Aorta (tissue), 5 donors: ENCODE measurements at regions of chr13 and their contacts with region 1.

Region 1: DNA sequence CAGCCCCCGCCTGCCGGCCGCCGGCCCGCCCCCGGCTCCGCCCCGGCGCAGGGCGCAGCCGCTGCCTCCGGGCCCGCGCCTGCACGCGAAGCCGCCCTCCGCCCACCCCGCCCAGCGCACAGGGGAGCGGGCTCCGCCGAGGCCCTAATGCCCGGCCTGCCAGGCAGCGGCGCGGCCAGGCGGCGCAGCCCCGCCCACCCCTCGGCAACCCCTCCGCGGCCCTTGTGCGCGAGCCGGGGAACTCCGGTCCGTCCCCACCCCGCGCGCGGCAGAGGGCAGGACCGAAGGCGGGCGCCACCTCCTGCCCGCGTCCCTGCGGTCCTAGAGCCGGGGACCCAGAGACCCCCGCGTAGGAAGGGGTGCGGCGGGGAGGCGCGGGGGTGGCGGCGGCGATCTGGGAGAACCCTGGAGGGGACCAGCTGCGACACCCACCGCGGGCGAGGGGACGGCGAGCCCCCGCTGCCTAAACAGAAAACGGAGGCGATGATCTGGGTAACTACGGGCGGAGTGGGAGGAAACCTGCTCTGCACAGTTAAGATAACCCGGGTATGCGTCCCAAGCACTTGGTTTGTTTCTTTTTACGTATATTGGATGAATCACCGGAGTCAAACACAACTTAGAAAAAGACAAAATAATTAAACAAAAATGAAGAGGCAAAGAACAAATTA is 350 bp upstream of the USP12 start:
- DNase-seq: peak; percentile 97 to 98
- ATAC-seq: peak; percentile 96
- H3K4me3 ChIP-seq: peak overlapping the region; percentile 93 to 99
- H3K27ac ChIP-seq: peak overlapping the region; percentile 58 to 97
- H3K4me1 ChIP-seq: peaks cover 6% of the 10 kb centered on the region in 2 donors
- H3K27me3 ChIP-seq: no peaks in the 10 kb centered on the region

Region 2: DNA sequence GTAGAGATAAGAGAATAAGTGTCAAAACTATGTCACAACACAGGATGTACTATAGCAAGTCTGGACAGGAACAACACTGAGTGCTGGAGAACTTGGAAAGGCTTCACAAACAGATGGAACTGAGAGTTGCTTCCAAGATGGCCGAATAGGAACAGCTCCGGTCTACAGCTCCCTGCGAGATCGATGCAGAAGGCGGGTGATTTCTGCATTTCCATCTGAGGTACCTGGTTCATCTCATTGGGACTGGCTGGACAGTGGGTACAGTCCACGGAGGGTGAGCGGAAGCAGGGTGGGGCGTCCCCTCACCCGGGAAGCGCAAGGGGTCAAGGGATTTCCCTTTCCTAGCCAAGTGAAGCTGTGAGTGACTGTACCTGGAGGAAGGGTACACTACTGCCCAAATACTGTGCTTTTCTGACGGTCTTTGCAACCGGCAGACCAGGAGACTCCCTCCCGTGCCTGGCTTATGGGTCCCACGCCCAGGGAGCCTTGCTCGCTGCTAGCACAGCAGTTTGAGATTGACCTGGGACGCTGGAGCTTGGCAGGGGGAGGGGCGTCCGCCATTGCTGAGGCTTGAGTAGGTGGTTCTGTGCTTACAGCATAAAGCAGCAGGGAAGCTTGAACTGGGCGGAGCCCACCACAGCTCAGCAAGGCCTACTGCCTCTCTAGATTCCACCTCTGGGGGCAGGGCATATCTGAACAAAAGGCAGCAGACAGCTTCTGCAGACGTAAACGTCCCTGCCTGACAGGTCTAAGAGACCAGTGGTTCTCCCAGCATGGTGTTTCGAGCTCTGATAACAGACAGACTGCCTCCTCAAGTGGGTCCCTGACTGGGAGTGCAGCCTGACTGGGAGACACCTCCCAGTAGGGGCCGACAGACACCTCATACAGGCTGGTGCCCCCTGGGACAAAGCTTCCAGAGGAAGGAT is 46.3 kb before region 1 on chr13:
- intact Hi-C with region 1: loop called in 1 of 2 experiments (anchors 5 kb)
- DNase-seq: no peak
- ATAC-seq: no peak
- H3K4me3 ChIP-seq: no peak overlapping the region
- H3K27ac ChIP-seq: no peak overlapping the region
- H3K4me1 ChIP-seq: peaks cover 2 to 15% of the 10 kb centered on the region in 2 donors
- H3K27me3 ChIP-seq: no peaks in the 10 kb centered on the region

Region 3: DNA sequence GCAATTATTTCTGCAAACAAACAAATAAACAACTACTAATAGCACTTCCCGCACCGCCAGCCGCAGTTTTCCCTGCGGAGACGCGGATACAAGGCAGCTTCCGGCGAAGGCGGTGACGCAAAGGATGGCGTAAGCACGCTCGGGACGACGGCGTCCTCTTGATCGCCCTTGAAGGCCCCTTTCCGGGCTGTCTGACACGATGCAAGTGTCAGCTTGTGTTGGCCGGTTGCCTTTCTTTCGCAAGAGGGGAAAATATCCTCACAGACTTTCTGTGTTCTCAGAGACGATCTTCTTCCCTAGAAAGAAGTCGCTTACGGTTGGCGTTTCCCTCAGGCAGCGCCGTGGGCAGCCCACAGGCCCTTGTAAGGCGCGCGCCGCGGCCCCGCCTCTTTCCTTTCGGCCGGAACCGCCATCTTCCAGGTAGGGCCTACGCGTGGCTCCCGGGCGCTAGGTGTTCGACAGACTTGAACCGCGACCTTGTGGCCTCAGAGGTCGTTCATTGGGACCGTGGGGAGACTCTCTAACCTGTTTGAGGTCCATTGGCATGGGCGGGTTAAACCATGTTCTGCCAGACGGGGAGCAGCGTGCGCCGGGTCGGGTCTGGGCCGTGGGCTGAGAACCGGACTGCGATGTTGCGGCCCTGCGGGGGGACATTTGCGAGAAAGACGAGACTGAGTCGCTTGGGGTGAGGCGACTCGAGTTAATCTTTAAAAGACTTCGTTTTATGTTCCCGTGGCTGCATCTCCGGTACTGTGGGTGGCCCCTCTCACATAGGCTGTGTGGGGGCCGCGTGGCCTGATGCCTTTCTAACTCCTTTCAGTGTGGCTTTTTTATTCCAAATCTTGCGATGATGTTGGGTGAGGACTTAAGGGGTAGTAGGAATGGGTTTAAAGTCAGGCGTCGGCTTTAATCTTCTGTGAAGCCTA is 79.5 kb after region 1 on chr13 and contains the start of gene RPL21:
- intact Hi-C with region 1: loop called (anchors 5 kb)
- DNase-seq: peak; percentile 98
- ATAC-seq: peak; percentile 98
- H3K4me3 ChIP-seq: peak within 1 kb of the TSS; percentile 74 to 86
- H3K27ac ChIP-seq: peak within 1 kb of the TSS; percentile 35 to 74
- H3K4me1 ChIP-seq: peaks cover 2 to 6% of the 10 kb centered on the region in 2 donors
- H3K27me3 ChIP-seq: no peaks in the 10 kb centered on the region
- total RNA-seq, gene RPL21: 828 to 889 TPM

Region 4: GRCh38 chr13:27276188-27276587 is 104.2 kb after region 1 on chr13:
- intact Hi-C with region 1: loop called (anchors 5 kb)
- DNase-seq: no peak
- ATAC-seq: no peak
- H3K4me3 ChIP-seq: no peak overlapping the region
- H3K27ac ChIP-seq: no peak overlapping the region
- H3K4me1 ChIP-seq: no peaks in the 10 kb centered on the region
- H3K27me3 ChIP-seq: no peaks in the 10 kb centered on the region

Region 5: GRCh38 chr13:27620377-27621115 is 448.6 kb after region 1 on chr13 and contains the start of gene LNX2:
- intact Hi-C with region 1: loop called in 1 of 2 experiments (anchors 10 kb)
- DNase-seq: peak; percentile 99
- ATAC-seq: peak; percentile 98
- H3K4me3 ChIP-seq: peak within 1 kb of the TSS; percentile 82 to 99
- H3K27ac ChIP-seq: peak within 1 kb of the TSS; percentile 43 to 99
- H3K4me1 ChIP-seq: peaks cover 0 to 4% of the 10 kb centered on the region in 2 donors
- H3K27me3 ChIP-seq: no peaks in the 10 kb centered on the region
- total RNA-seq, gene LNX2: 9.5 to 10.3 TPM